ENCODE measurements at regions of chr10 and their contacts with region 1.

Region 1: DNA sequence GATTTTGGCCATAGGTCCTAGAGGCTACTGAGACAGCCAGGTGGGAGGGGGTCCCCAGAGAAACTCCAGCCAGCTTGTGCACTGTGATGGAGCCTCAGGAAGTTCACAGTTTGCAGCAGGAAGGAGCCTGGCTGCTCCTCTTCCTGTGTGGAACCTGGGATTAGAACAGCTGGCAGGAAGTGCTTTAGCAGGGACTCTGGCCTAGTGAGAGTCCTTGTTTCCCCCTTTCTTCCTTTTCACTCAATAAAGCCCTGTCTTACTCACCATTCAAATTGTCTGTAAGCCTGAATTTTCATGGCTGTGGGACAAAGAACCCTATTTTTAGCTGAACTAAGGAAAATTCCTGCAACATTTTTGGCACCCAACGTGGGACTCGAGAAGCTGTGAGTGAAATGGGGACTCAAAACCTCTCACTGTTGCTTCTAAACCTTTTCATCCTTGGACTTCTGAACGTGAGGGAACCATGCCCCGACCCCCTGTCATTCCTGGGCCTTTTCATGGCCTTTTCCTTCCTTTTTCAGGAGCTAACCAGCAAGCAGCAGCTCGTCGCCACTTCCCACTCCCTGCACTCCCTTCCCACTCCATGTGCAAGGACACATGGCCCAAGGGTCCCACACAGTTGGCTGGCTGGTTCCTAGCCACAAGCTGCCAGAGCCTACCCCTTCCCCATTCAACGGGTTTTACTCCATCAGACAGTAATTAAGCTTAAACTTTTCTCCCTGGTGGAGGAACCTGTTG is 32.8 kb upstream of the SORCS3 start:
- DNase-seq: no peak
- CTCF ChIP-seq: no peak

Region 2: DNA sequence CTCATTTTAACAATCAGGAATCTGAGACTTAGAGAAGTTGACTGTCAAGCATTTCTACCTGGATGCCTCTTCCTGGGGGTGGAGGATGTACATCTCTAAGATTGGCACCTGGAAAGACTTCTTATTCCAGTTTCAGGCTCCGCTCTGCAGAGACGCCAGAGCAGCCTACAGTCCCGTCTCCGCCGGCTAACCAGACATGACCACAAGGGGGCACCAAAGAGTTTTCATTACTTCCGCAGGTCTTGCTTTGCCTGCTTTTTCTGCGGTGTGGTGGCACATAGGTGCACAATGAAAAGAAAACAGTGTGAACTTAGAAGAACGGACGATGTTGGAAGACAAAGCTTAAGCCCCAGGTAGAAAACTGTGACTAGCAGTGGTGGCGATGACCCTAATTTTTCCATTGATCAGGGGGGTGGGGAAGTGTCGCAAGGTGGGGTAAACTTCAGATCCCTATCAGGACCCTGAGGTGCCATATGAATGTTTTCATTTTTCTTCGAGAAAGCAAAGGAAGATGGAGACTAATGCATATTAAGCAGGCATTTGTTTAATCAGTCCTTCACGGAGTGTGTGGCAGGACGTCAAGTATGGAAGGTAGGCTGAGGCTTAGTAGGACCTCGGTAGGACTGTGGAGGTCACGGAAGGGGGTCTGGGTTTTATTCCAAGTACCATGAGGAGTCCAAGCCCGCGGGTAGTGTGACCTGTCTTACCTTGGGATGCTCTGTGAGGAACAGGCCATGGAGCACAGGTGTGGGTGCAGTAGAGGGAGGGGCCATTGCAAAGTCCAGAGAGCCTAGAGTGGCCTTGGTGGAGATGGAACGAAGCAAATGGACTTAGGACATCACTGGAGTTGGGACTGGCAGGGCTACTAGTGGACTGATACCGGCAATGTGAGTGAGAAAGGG is 27.2 kb before region 1 on chr10:
- CTCF ChIA-PET with region 1: interaction called, 12 read pairs
- POLR2A ChIA-PET with region 1: no interaction called
- DNase-seq: peak; percentile 73
- CTCF ChIP-seq: peak; percentile 78

Measured in GM10248 (cell line).